Common myeloid progenitor, CD34-positive (primary cell): ENCODE measurements at regions of chr1 and their contacts with region 1.

Region 1: DNA sequence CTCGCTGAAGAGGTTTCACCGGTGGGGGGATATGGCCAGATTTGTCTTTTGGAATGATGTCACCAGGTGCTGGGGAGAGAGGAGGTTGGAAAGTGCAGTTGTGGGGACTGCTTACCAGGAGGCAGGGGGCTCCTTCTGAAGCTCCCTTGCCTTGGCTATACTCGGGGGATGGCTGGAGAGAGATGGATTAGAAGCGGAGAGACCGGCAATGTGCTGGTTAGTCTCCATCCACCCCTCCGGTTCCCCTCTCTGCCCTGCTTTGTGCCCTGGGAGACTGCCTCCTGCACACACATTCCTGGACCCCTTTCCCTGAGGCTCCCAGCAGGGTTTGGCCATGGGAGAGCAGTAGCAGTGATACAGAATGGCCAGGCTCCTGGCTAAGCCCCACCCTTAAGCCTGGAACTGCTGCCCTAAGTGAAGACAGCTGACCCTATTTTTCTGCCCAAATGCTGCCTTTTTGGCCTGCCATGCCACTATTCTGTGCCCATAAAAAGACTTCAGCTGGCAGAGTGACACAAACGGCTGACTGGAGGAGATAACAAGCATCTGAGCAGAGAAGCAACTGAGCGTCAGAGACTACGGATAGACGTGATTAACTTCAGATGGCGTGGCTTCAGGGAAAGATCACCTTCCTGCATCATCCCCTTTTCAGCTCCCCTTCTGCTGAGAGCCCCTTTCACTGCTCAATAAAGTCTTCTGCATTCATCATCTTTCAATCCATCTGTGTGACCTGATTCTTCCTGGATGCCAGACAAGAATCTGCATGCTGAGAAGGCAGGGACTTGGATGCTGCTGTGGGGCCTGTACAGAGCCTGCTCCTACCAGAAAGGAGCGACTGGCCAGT is 14.5 kb upstream of the VPS13D start:
- DNase-seq: peak in 2 of 3 donors; percentile 38 to 61
- H3K4me3 ChIP-seq: no peak overlapping the region
- H3K27ac ChIP-seq: no peak overlapping the region
- H3K4me1 ChIP-seq: peaks cover 0 to 11% (median 8%) of the 10 kb centered on the region in 4 experiments
- H3K27me3 ChIP-seq: no peaks in the 10 kb centered on the region

Region 2: DNA sequence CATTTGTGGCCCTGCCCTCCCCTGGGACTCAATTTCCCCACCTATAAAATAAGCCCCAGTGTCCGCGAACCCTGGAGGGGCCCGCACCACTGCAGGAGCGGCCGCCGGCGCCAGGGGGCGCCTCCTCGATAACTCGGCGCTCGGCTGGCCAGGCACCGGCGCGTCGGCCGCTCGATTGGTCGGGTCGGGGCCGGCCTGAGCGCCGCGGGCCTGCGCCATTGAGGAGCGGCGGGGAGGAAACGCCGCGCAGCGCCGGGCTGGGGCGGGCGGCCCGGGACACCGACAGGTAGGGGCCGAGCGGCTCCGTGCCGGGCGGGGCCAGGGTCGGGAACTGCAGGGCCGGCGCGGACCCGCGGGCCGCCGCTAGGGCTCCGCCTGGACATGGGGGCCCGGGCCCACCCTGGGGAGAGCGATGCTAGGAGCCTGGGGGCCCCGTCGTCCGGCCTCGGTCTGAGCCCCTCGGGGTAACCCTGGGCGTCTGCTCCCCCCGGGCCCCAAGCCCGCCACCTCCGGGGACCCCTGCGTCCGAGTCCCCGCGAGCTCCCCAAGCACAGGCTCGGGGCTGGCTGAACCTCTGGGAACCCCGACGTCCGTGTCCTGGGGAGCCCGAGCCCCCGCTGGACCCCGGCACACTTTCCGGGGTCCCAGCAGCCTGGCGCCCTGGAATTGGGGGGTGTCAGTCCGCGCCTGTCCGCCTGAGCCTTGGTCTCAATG is 14.7 kb after region 1 on chr1 and contains the start of gene VPS13D:
- CTCF ChIA-PET with region 1: interaction called, 15 read pairs
- POLR2A ChIA-PET with region 1: no interaction called
- DNase-seq: peak; percentile 78 to 88 (median 86)
- H3K4me3 ChIP-seq: peak within 1 kb of the TSS; percentile 69 to 92 (median 88)
- H3K27ac ChIP-seq: peak within 1 kb of the TSS; percentile 25 to 84
- H3K4me1 ChIP-seq: peaks cover 4 to 12% (median 11%) of the 10 kb centered on the region in 4 experiments
- H3K27me3 ChIP-seq: no peaks in the 10 kb centered on the region

Region 3: DNA sequence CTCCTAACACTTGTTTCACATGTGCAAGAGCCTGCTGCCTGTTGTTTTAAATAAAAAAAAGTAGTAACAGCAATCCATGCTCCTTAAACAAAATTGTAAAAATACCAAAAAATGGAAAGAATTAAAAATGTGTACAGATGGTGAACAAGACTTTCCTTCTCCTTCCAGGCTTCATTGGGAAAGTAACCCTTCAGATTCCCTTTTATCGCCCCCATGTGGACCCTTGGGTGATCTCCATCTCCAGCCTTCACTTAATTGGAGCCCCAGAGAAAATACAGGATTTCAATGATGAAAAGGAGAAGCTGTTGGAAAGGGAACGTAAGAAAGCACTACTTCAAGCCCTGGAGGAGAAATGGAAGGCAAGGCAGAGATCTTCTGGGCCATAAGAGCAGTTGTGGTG is 28.7 kb after region 1 on chr1:
- CTCF ChIA-PET with region 1: no interaction called
- POLR2A ChIA-PET with region 1: no interaction called
- DNase-seq: peak in 2 of 3 donors; percentile 6 to 33
- H3K4me3 ChIP-seq: no peak overlapping the region
- H3K27ac ChIP-seq: no peak overlapping the region
- H3K4me1 ChIP-seq: no peaks in the 10 kb centered on the region
- H3K27me3 ChIP-seq: no peaks in the 10 kb centered on the region